ENCODE measurements at regions of chrX and their contacts with region 1.

Region 1: DNA sequence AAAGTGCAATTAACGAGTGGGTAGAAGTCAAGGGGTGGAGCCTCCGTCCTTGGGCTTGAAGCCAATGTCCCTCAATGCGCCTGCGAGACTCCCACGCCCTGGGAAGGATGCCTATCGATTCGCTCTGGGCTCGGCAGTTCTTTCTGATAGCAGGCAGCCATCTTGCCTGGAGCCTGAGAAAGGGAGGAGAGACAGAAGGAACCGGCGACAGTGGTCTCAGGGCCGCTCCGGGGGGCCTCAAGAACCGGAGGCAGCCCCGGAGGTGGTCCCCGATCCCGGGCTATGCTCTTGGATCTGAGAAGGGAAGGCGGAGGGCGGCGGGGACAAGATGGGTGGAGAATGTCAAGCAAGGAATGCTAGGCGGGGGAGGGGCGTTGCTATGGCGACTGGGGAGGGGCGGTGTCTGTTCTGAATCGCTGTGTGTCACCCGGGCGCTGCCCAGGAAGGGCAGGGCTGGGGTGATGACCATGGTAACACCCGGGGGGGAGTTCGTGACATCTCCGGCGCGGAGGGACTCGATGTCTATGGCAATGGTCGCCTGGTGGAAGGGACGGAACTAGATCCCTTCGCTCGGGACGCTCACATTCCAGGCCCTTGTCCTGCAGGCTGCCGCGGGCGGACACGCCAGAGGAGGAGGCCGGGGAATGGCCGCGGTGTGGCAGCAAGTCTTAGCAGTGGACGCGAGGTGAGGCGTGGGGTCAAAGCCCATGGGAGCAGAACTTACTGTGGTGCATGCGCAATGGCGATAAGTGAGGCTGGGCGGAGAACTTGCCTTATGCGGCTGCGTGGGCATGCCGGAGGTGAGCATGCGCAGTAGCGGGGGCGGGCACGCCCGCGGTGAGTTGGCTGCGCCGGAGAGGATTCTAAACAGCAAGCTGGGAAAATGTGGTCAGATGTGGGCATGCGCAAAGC is at the start of gene WDR13:
- DNase-seq: peak; percentile 95
- H3K4me3 ChIP-seq: peak within 1 kb of the TSS; percentile 60 to 75 (median 72)
- H3K27ac ChIP-seq: peak within 1 kb of the TSS; percentile 87
- H3K4me1 ChIP-seq: peaks cover 14% of the 10 kb centered on the region
- H3K27me3 ChIP-seq: no peaks in the 10 kb centered on the region
- CTCF ChIP-seq: no peak
- POLR2A ChIP-seq: peak; percentile 27
- total RNA-seq, gene WDR13: 85.0 and 96.1 TPM in 2 replicates

Region 2: DNA sequence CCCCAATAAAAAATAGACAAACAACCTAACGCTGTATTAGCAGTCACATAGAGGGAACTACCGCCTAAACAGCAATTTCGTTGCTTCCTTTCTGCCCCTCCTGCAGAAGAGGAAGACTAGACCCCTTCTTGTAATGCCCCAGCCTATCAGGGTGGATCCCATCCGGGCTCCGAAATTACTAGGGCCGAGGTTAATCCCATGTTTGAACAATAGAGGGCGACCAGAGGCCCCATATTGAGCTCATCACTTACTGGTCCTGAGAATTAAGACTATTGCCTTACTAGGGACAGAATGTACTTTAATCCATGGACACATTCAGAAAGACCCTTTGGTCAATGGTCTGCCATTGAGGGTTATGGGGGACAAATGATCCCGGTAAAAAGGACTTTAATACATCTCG is 514.4 kb before region 1 on chrX:
- CTCF ChIA-PET with region 1: no interaction called
- POLR2A ChIA-PET with region 1: no interaction called
- dilution Hi-C with region 1: no loop called
- intact Hi-C with region 1: loop called (anchors 10 kb)
- DNase-seq: peak; percentile 53
- H3K4me3 ChIP-seq: no peak overlapping the region
- H3K27ac ChIP-seq: no peak overlapping the region
- H3K4me1 ChIP-seq: no peaks in the 10 kb centered on the region
- H3K27me3 ChIP-seq: peaks cover 0 to 1% of the 10 kb centered on the region in 2 experiments
- CTCF ChIP-seq: peak; percentile 37 to 39
- POLR2A ChIP-seq: no peak

Region 3: DNA sequence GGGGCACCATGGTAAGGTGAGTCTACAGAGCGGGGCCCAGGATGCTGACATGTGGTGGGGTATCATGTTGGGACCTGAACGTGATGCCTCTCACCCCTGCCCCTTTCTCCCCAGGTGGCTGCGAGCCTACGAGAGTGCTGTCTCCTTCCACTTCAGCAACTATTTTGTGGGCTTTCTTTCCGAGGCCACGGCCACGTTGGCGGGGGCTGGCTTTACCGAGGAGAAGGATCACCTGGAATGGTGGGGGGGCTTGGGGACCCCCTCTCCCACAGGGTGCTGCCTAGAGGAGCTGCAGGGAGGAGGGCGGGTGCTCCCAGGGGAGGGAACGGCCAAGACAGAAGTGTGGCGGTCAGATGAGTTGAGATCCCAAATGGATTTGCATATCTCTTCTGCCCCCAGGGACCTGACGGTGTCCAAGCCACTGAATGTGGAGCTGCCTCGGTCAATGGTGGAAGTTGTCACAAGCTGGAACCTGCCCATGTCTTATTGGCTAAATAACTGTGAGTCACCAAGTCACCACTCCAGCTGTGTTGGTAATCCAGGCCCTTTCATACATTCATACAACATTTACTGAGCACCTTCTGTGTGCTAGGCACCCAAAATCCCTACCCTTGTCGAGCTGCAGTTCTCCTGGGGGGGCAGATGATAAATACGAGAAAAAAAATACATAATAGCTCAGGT is 83.3 kb before region 1 on chrX:
- CTCF ChIA-PET with region 1: no interaction called
- POLR2A ChIA-PET with region 1: no interaction called
- dilution Hi-C with region 1: no loop called
- intact Hi-C with region 1: no loop called
- DNase-seq: no peak
- H3K4me3 ChIP-seq: no peak overlapping the region
- H3K27ac ChIP-seq: no peak overlapping the region
- H3K4me1 ChIP-seq: no peaks in the 10 kb centered on the region
- H3K27me3 ChIP-seq: no peaks in the 10 kb centered on the region
- CTCF ChIP-seq: no peak
- POLR2A ChIP-seq: no peak

Region 4: DNA sequence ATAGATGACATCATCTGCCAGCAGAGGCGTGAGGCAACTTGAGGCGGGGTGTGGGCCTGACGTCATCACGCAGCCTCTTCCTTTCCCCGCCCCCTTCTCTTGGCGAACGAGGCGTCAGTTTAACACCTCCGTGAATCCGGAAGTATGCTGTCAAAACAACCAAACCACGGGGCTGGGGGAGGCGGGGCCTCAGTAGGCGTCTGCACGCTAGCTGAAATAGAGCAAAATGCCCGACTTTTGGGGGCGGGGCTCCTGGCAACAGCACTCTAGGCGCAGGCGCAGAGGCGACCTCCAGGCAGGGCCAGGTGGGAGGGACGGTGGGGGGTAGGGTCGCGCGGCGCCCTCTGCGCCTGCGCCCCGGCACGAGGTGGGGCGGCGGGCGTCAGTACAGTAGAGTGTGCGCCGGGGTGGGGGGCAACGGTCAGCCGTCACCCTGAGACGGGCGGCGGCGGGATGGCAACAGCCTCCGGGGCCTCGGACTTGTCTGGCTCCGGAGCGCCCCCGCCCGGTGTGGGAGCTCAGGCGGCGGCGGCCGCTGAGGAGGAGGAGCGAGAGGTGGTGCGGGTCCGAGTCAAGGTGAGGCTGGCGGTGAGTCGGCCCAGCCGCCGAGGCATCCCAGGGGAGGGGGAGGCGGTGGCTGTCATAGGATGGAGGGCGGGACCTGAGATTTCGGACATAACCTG is 58.1 kb before region 1 on chrX and contains the start of gene TBC1D25:
- CTCF ChIA-PET with region 1: no interaction called
- POLR2A ChIA-PET with region 1: interaction called, 3 read pairs
- dilution Hi-C with region 1: no loop called
- intact Hi-C with region 1: loop called (anchors 2 kb)
- DNase-seq: peak; percentile 97
- H3K4me3 ChIP-seq: peak within 1 kb of the TSS; percentile 52 to 88 (median 61)
- H3K27ac ChIP-seq: peak within 1 kb of the TSS; percentile 71
- H3K4me1 ChIP-seq: peaks cover 7% of the 10 kb centered on the region
- H3K27me3 ChIP-seq: no peaks in the 10 kb centered on the region
- CTCF ChIP-seq: peak; percentile 23 to 44
- POLR2A ChIP-seq: no peak
- total RNA-seq, gene TBC1D25: 14.4 and 16.3 TPM in 2 replicates

Region 5: DNA sequence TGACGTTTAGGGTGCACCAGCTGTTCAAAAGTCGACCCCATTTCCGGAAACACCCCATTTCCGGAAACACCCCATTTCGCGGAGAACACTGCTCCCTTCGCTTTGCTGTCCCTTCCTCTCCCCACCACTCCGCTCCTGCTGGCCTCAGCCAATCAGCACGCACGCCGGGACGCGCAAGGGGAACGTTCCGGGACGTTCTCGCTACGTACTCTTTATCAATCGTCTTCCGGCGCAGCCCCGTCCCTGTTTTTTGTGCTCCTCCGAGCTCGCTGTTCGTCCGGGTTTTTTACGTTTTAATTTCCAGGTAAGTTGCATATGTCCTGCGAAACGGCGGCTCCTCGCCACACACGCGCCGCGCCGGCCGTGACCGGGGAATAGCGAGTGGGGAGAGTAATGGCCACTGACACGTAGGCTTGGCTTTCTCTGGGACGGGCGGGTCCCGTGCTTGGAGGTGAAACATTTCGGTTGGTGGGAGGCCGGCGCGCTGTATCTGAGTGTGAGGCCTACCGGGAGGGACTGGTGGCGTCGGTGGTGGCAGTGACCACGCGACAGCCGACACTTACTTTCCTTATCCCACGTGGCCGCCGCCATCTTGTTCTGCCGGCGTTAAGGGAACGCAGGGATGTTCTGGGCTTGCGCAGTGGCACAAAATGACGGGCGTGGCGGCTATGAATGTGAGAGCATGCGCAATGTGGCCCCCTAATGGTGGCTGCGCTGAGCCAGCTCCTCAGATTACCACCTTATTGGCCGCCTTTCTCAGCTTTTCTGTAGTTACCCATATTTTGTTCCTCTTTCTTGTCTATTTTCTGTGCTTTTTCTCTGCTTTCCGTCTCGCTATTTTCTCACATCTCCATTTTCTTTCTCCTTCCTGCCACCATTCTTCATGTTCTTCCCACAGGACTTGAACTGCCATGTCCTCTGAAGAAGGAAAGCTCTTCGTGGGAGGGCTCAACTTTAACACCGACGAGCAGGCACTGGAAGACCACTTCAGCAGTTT is 23.0 kb before region 1 on chrX and contains the start of gene RBM3:
- CTCF ChIA-PET with region 1: interaction called, 3 read pairs
- POLR2A ChIA-PET with region 1: interaction called, 7 read pairs
- dilution Hi-C with region 1: no loop called
- intact Hi-C with region 1: loop called (anchors 1 kb)
- DNase-seq: peak; percentile 90
- H3K4me3 ChIP-seq: peak within 1 kb of the TSS; percentile 60 to 96 (median 75)
- H3K27ac ChIP-seq: peak within 1 kb of the TSS; percentile 95
- H3K4me1 ChIP-seq: peaks cover 26% of the 10 kb centered on the region
- H3K27me3 ChIP-seq: no peaks in the 10 kb centered on the region
- CTCF ChIP-seq: peak in 1 of 2 donors; percentile 48
- POLR2A ChIP-seq: peak; percentile 80
- total RNA-seq, gene RBM3: 477 and 485 TPM in 2 replicates

Region 6: DNA sequence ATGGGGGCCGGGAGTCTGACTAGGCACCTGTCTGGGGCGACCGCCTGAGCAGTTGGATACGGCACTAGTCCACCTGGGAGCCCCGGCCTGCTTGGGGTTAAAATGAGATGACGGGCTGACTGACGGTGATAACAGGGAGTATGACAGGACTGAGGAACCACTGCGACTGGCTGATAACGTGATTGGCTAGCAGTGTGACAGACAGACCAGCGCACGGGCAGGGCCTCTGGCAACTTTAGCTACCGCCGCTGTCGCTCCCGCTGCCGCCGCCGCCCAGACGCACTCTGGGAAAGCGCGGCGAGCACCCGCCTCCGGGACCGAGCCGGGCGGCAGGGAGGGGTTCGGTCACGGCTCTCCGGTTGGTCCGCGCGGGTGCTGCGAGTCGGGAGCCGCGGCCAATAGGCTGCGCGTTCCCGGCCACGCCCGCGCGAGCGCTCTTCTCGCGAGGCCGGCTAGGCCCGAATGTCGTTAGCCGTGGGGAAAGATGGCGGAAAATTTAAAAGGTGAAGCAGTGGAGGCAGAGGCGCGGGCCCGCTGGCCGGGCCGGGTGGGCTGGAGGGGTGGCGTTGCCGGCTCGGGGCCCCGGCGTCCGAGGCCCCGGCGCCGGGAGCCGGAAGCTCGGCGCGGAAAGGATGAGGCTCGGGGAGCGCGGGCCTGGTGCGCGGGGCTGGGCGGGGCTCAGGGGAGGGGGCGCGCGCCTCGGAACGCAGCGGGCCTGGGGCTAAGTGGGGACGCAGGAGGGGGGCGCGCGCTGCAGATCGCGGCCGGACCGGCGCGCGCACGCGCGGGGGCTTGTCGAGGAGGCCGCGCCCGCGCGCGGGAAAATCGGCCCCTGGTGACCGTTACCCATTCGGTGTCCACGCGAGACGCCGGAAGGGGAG is 98.9 kb after region 1 on chrX and contains the start of gene SUV39H1:
- CTCF ChIA-PET with region 1: no interaction called
- POLR2A ChIA-PET with region 1: no interaction called
- dilution Hi-C with region 1: no loop called
- intact Hi-C with region 1: loop called (anchors 1 kb)
- DNase-seq: peak; percentile 87
- H3K4me3 ChIP-seq: peak within 1 kb of the TSS; percentile 60 to 76 (median 72)
- H3K27ac ChIP-seq: peak within 1 kb of the TSS; percentile 57
- H3K4me1 ChIP-seq: peaks cover 5% of the 10 kb centered on the region
- H3K27me3 ChIP-seq: no peaks in the 10 kb centered on the region
- CTCF ChIP-seq: no peak
- POLR2A ChIP-seq: peak; percentile 80
- total RNA-seq, gene SUV39H1: 18.2 and 20.0 TPM in 2 replicates

Measured in endothelial cell of umbilical vein (primary cell).